ENCODE measurements at regions of chr3 and their contacts with region 1.

Region 1: GRCh38 chr3:18772699-18773305 is 347.7 kb upstream of the SATB1 start:
- DNase-seq: no peak
- H3K4me3 ChIP-seq: no peak overlapping the region
- H3K27ac ChIP-seq: no peak overlapping the region
- H3K4me1 ChIP-seq: no peaks in the 10 kb centered on the region
- H3K27me3 ChIP-seq: no peaks in the 10 kb centered on the region
- CTCF ChIP-seq: no peak
- EP300 ChIP-seq: no peak
- POLR2A ChIP-seq: no peak

Region 2: GRCh38 chr3:18481946-18482548 is 290.8 kb before region 1 on chr3:
- intact Hi-C with region 1: no loop called
- DNase-seq: no peak
- H3K4me3 ChIP-seq: no peak overlapping the region
- H3K27ac ChIP-seq: no peak overlapping the region
- H3K4me1 ChIP-seq: peaks cover 0 to 10% (median 0%) of the 10 kb centered on the region in 4 donors
- H3K27me3 ChIP-seq: no peaks in the 10 kb centered on the region
- CTCF ChIP-seq: no peak
- EP300 ChIP-seq: no peak
- POLR2A ChIP-seq: no peak

Region 3: GRCh38 chr3:18562364-18563154 is 210.2 kb before region 1 on chr3:
- intact Hi-C with region 1: loop called (anchors 10 kb)
- DNase-seq: no peak
- H3K4me3 ChIP-seq: no peak overlapping the region
- H3K27ac ChIP-seq: no peak overlapping the region
- H3K4me1 ChIP-seq: peaks cover 0 to 7% (median 0%) of the 10 kb centered on the region in 4 donors
- H3K27me3 ChIP-seq: no peaks in the 10 kb centered on the region
- CTCF ChIP-seq: no peak
- EP300 ChIP-seq: no peak
- POLR2A ChIP-seq: no peak

Measured in stomach (tissue), 19 donors.